ENCODE measurements at regions of chr1 and their contacts with region 1.

Region 1: GRCh38 chr1:107529502-107530149 is 388.8 kb downstream of the NTNG1 start:
- DNase-seq: peak; percentile 19
- ATAC-seq: peak; percentile 98
- H3K4me3 ChIP-seq: no peak overlapping the region
- H3K27ac ChIP-seq: no peak overlapping the region
- H3K4me1 ChIP-seq: no peaks in the 10 kb centered on the region
- H3K27me3 ChIP-seq: no peaks in the 10 kb centered on the region
- CTCF ChIP-seq: peak; percentile 85 to 95 (median 88); a peak in 5 of 6 replicates
- EP300 ChIP-seq: no peak
- POLR2A ChIP-seq: no peak
- RAD21 ChIP-seq: peak; percentile 98

Region 2: GRCh38 chr1:107277022-107277421 is 252.6 kb before region 1 on chr1:
- CTCF ChIA-PET with region 1: interaction called, 124 read pairs
- POLR2A ChIA-PET with region 1: no interaction called
- RAD21 ChIA-PET with region 1: interaction called, 34 read pairs
- SMC1A ChIA-PET with region 1: interaction called, 98 read pairs
- in situ Hi-C with region 1: loop called (anchors 25 kb)
- intact Hi-C with region 1: loop called (anchors 1 kb)
- DNase-seq: no peak
- ATAC-seq: peak; percentile 75
- H3K4me3 ChIP-seq: no peak overlapping the region
- H3K27ac ChIP-seq: no peak overlapping the region
- H3K4me1 ChIP-seq: no peaks in the 10 kb centered on the region
- H3K27me3 ChIP-seq: no peaks in the 10 kb centered on the region
- CTCF ChIP-seq: peak; percentile 44 to 51 (median 46); a peak in 5 of 6 replicates
- EP300 ChIP-seq: no peak
- POLR2A ChIP-seq: no peak
- RAD21 ChIP-seq: peak; percentile 53

Region 3: GRCh38 chr1:107419003-107419402 is 110.6 kb before region 1 on chr1:
- CTCF ChIA-PET with region 1: interaction called, 8 read pairs
- POLR2A ChIA-PET with region 1: no interaction called
- RAD21 ChIA-PET with region 1: interaction called, 10 read pairs
- SMC1A ChIA-PET with region 1: interaction called, 4 read pairs
- in situ Hi-C with region 1: no loop called
- intact Hi-C with region 1: no loop called
- DNase-seq: no peak
- ATAC-seq: no peak
- H3K4me3 ChIP-seq: no peak overlapping the region
- H3K27ac ChIP-seq: no peak overlapping the region
- H3K4me1 ChIP-seq: no peaks in the 10 kb centered on the region
- H3K27me3 ChIP-seq: no peaks in the 10 kb centered on the region
- CTCF ChIP-seq: no peak
- EP300 ChIP-seq: no peak
- POLR2A ChIP-seq: no peak
- RAD21 ChIP-seq: no peak

Region 4: DNA sequence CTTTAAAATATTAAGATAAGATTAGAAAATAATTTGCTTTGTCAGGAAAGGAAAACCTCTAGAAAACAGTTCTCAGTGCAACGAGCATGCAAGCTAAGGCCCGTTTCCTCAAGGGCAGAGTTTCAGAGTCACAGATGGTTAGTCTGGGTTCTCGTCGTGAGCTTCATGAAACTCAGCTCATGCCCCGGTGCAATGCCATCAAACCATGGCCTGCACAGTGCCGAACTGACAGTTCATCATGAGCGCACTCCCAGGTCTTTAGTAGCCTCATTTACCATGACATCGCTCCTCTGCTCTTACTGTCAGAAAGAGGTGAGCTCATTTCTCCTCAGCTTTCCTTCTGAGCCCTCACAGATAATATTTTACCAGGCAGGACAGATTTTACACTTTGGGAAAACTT is 69.6 kb before region 1 on chr1:
- CTCF ChIA-PET with region 1: interaction called, 14 read pairs
- POLR2A ChIA-PET with region 1: no interaction called
- RAD21 ChIA-PET with region 1: interaction called, 4 read pairs
- SMC1A ChIA-PET with region 1: interaction called, 18 read pairs
- in situ Hi-C with region 1: no loop called
- intact Hi-C with region 1: no loop called
- DNase-seq: peak; percentile 40
- ATAC-seq: peak; percentile 88
- H3K4me3 ChIP-seq: no peak overlapping the region
- H3K27ac ChIP-seq: no peak overlapping the region
- H3K4me1 ChIP-seq: peaks cover 10% of the 10 kb centered on the region
- H3K27me3 ChIP-seq: no peaks in the 10 kb centered on the region
- CTCF ChIP-seq: no peak
- EP300 ChIP-seq: no peak
- POLR2A ChIP-seq: no peak
- RAD21 ChIP-seq: no peak

Region 5: DNA sequence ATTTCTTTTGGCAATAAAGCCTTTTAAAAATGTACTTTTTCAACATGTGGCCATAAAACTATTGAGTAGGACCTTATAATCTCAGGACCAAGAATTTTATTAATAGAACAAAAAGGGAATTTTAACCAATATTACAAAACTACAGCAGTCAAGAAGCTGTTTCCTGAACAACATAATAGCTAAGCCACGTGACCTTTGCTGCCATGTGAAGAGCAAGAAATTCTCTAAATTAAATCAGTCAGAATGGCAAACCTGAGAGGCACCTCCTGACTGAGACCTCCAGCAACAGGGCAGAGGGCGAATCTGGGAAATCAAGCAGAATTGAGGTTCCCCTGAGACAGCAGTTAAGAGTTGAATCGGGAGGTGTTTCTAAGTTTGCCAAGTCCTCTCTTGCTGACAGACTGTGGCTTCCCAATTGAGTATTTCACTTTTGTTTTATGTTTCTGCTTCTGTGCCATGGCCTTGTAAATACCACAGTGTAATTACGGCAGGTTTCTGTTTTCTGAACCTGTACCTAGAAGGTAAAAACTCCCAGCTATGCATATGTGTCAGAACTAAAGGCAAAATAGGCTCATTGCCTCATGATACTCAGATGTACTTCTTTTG is 30.4 kb before region 1 on chr1:
- CTCF ChIA-PET with region 1: interaction called, 39 read pairs
- POLR2A ChIA-PET with region 1: no interaction called
- RAD21 ChIA-PET with region 1: interaction called, 13 read pairs
- SMC1A ChIA-PET with region 1: interaction called, 22 read pairs
- in situ Hi-C with region 1: no loop called
- intact Hi-C with region 1: no loop called
- DNase-seq: peak; percentile 76
- ATAC-seq: peak; percentile 97
- H3K4me3 ChIP-seq: no peak overlapping the region
- H3K27ac ChIP-seq: peak overlapping the region; percentile 57
- H3K4me1 ChIP-seq: peaks cover 13% of the 10 kb centered on the region
- H3K27me3 ChIP-seq: no peaks in the 10 kb centered on the region
- CTCF ChIP-seq: no peak
- EP300 ChIP-seq: peak; percentile 64 to 69; a peak in 2 of 4 replicates
- POLR2A ChIP-seq: no peak
- RAD21 ChIP-seq: no peak

Region 6: DNA sequence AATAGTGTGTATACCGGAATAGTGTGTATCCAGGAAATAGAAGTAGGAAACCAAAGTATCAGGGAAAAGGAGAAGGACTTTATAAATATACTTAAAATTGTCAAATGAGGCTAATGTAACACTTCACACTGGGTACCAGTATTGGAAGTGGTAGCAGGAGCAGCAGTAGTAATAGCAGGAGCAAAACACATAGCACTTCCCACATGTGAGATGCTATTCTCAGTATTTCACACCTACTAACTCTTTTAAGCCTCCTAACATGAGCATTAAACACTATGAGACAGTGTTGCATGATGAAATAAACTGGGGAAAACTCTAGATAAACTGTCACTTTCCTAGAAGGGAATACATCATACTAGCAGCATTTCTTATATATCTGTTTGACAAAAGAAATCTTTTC is 58.7 kb after region 1 on chr1:
- CTCF ChIA-PET with region 1: no interaction called
- POLR2A ChIA-PET with region 1: no interaction called
- RAD21 ChIA-PET with region 1: no interaction called
- SMC1A ChIA-PET with region 1: no interaction called
- in situ Hi-C with region 1: no loop called
- intact Hi-C with region 1: no loop called
- DNase-seq: no peak
- ATAC-seq: no peak
- H3K4me3 ChIP-seq: no peak overlapping the region
- H3K27ac ChIP-seq: no peak overlapping the region
- H3K4me1 ChIP-seq: no peaks in the 10 kb centered on the region
- H3K27me3 ChIP-seq: no peaks in the 10 kb centered on the region
- CTCF ChIP-seq: no peak
- EP300 ChIP-seq: no peak
- POLR2A ChIP-seq: no peak
- RAD21 ChIP-seq: no peak